ENCODE measurements at regions of chr3 and their contacts with region 1.

Region 1: DNA sequence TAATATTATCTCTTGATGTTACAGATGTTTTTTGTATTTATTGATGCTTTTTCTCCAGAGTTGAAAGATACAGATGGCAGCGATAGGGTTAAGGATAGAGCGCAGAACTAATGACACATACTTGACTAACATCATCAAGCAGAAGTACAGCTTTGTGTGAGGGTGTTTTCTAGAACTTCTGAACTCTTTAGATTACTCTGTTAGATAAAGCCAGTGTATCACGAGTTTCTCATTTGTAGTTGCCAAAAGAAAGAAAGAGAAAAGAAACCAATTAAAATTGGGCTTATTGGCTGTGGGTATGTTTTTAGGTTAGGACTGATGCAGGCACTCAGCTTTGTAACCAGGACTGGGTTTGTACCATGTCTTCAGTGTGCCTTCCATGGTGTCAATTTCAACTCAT is 6.6 kb upstream of the GPR171 start:
- DNase-seq: no peak
- H3K4me3 ChIP-seq: no peak overlapping the region
- CTCF ChIP-seq: no peak
- POLR2A ChIP-seq: no peak

Region 2: GRCh38 chr3:149744151-149744550 is 1465.5 kb before region 1 on chr3:
- intact Hi-C with region 1: loop called (anchors 5 kb)
- DNase-seq: no peak
- H3K4me3 ChIP-seq: no peak overlapping the region
- CTCF ChIP-seq: no peak
- POLR2A ChIP-seq: no peak

Region 3: GRCh38 chr3:151282921-151283320 is 73.3 kb after region 1 on chr3:
- intact Hi-C with region 1: no loop called
- DNase-seq: no peak
- H3K4me3 ChIP-seq: no peak overlapping the region
- CTCF ChIP-seq: peak in 1 of 3 donors; percentile 10
- POLR2A ChIP-seq: no peak